ENCODE measurements at regions of chr18 and their contacts with region 1.

Region 1: DNA sequence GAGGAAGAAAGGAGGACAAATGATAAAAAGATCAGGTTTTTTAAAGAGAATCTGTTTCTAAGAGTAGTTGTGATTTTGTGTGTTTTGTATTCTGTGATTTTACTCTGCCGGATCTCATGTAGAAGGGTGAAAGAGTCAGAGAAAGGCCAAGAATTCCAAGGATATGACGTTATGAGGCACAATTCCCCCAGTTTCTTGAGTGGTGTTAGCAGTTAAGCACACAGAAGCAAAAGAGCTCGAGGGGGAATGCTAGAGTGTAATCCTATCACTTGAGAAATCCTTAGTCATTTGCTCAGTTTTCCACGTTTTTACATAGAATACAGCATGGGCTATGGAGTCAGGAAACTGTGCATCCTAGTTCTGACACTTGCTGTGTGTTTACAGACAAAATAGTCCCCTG is 34.8 kb downstream of the METTL4 start:
- DNase-seq: no peak
- H3K4me3 ChIP-seq: no peak overlapping the region
- H3K27ac ChIP-seq: no peak overlapping the region
- H3K27me3 ChIP-seq: no peaks in the 10 kb centered on the region
- CTCF ChIP-seq: no peak

Region 2: GRCh38 chr18:864872-865273 is 1671.6 kb before region 1 on chr18:
- CTCF ChIA-PET with region 1: interaction called, 11 read pairs
- POLR2A ChIA-PET with region 1: no interaction called
- DNase-seq: peak; percentile 39
- H3K4me3 ChIP-seq: no peak overlapping the region
- H3K27ac ChIP-seq: no peak overlapping the region
- H3K27me3 ChIP-seq: peaks cover 7% of the 10 kb centered on the region
- CTCF ChIP-seq: peak; percentile 100

Region 3: GRCh38 chr18:1954583-1955312 is 581.7 kb before region 1 on chr18:
- CTCF ChIA-PET with region 1: no interaction called
- POLR2A ChIA-PET with region 1: no interaction called
- DNase-seq: no peak
- H3K4me3 ChIP-seq: no peak overlapping the region
- H3K27ac ChIP-seq: no peak overlapping the region
- H3K27me3 ChIP-seq: no peaks in the 10 kb centered on the region
- CTCF ChIP-seq: no peak

Region 4: DNA sequence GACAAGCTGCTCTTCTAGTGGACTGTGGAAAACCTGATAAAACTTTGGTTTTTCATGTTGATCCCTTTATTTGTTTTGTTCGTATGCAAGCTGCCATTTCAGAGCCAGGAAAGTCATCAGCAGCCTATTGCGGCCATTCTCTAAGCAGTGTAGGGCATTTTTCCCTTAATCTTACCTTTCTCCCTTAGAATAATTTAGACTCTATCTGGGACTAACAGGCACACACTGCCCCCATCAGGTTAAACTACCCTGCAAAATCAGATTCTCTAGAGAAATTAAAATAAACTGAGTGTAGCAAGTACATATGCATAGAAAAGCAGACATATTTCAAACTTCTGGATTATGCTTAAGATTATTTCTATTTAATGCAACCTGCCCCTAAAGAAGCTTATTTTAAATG is 312.6 kb before region 1 on chr18:
- CTCF ChIA-PET with region 1: interaction called, 26 read pairs
- POLR2A ChIA-PET with region 1: no interaction called
- DNase-seq: no peak
- H3K4me3 ChIP-seq: peak overlapping the region; percentile 39
- H3K27ac ChIP-seq: no peak overlapping the region
- H3K27me3 ChIP-seq: no peaks in the 10 kb centered on the region
- CTCF ChIP-seq: peak; percentile 68

Region 5: DNA sequence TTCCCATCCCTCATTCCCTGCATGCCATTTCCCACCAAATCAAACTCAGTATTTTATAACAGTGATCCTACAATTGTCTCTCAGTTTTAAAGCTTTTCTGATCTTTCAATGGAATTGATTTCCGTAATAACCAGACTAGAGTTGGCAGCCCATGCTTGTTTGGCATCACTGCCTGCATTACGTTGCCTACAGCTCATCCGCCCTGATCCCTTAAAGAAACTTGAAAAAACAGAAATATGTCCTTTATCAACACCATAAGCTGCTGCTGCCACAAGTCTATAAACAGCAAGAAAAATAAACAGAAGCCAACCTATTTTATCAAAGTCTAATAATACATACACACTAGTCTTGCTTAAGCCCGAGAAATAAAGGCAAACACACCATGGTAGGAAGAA is 296.2 kb before region 1 on chr18:
- CTCF ChIA-PET with region 1: interaction called, 20 read pairs
- POLR2A ChIA-PET with region 1: interaction called, 4 read pairs
- DNase-seq: peak; percentile 48
- H3K4me3 ChIP-seq: peak overlapping the region; percentile 1; the same call in 1 of the 2 replicates
- H3K27ac ChIP-seq: peak overlapping the region; percentile 65
- H3K27me3 ChIP-seq: no peaks in the 10 kb centered on the region
- CTCF ChIP-seq: no peak

Region 6: GRCh38 chr18:2325308-2325849 is 211.1 kb before region 1 on chr18:
- CTCF ChIA-PET with region 1: interaction called, 13 read pairs
- POLR2A ChIA-PET with region 1: no interaction called
- DNase-seq: no peak
- H3K4me3 ChIP-seq: no peak overlapping the region
- H3K27ac ChIP-seq: no peak overlapping the region
- H3K27me3 ChIP-seq: no peaks in the 10 kb centered on the region
- CTCF ChIP-seq: no peak

Region 7: GRCh38 chr18:2547477-2548087 is 11.1 kb after region 1 on chr18:
- CTCF ChIA-PET with region 1: interaction called, 12 read pairs
- POLR2A ChIA-PET with region 1: no interaction called
- DNase-seq: peak; percentile 36
- H3K4me3 ChIP-seq: no peak overlapping the region
- H3K27ac ChIP-seq: no peak overlapping the region
- H3K27me3 ChIP-seq: no peaks in the 10 kb centered on the region
- CTCF ChIP-seq: peak; percentile 58

Region 8: DNA sequence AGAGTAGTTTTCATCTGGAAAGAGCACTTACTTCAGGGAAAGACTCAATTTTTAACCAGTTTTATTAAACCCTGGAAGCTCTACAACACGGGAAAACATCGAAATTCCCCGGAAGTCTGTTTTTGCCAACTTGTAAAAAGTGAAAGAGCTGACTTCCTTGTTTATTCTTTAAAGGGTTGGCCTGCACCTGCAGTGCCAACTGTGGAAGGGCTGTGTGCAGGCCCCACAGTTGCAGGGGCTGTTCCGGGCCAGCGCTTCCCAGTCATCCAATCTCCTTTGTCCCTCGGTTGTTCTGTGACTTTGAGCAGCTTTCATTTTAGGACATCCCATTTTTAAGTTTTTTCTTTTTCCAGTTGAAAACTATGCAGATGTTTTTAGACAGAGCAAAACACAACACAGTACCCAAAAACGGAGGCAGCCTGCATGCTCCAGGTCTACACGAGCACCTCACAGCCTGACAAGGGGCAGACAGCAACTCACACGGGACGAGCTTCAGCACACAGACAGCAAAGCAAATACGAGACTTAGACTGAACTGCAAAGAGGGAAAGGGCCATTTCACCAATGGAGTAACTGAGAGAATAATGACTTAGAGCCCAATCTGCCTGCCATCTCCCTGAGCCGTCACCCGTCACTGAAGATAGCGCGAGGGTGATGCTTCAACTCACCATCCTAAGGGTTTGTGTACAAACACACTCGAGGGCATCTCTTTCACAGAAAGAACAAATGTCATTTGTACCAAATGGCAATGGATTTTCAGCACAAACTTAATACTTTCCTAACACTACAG is 381.0 kb after region 1 on chr18:
- CTCF ChIA-PET with region 1: no interaction called
- POLR2A ChIA-PET with region 1: no interaction called
- DNase-seq: no peak
- H3K4me3 ChIP-seq: no peak overlapping the region
- H3K27ac ChIP-seq: no peak overlapping the region
- H3K27me3 ChIP-seq: no peaks in the 10 kb centered on the region
- CTCF ChIP-seq: no peak